Activated CD4-positive, alpha-beta memory T cell treated with anti-CD3 and anti-CD28 coated beads, Interleukin-2, amount 10 ng/mL, durations not matched to agents 7 days and 5 days (primary cell): ENCODE measurements at regions of chrX and their contacts with region 1.

Region 1: DNA sequence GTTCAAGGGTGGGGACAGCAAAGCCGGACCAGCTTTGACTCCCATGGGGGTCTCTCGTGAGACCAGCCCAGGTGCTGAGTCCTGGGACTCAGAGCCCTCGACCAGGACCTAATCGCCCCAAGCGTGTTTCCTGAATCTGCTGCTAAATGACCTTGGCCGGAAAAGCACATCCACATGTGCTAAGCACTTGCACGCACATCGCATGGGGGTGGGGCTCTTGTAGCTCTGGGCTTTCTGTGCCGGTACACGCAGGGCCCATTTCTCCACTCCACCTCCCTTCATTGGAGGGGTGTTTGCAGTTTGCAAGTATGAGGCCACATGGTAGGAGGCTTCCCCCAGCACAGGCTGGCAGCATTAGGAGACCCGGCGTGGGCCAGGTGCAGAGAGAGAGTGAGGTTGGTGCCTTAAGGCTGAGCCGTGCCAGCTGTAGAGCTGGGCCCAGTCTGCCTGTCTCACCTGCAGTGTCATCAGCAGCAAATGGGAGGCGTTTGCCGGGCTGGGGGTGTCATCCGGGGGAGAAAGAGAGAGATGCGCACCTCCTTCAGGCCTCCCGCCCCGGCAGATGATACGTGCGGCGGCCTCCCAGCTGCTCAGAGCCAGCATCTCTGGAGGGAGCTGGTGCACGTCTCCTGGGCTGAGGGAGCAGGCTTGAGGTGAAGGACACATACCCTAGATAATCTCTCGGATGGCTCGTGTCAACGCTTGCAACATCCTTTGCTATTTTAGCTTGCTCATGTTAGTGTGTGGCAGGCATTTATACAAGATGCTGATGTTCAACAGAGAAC is 45.2 kb upstream of the CLCN4 start:
- DNase-seq: peak; percentile 53
- H3K4me3 Mint-ChIP-seq: peak overlapping the region; percentile 71
- H3K27ac Mint-ChIP-seq: peak overlapping the region; percentile 98
- H3K4me1 Mint-ChIP-seq: peaks cover 59% of the 10 kb centered on the region
- H3K27me3 Mint-ChIP-seq: no peaks in the 10 kb centered on the region

Region 2: DNA sequence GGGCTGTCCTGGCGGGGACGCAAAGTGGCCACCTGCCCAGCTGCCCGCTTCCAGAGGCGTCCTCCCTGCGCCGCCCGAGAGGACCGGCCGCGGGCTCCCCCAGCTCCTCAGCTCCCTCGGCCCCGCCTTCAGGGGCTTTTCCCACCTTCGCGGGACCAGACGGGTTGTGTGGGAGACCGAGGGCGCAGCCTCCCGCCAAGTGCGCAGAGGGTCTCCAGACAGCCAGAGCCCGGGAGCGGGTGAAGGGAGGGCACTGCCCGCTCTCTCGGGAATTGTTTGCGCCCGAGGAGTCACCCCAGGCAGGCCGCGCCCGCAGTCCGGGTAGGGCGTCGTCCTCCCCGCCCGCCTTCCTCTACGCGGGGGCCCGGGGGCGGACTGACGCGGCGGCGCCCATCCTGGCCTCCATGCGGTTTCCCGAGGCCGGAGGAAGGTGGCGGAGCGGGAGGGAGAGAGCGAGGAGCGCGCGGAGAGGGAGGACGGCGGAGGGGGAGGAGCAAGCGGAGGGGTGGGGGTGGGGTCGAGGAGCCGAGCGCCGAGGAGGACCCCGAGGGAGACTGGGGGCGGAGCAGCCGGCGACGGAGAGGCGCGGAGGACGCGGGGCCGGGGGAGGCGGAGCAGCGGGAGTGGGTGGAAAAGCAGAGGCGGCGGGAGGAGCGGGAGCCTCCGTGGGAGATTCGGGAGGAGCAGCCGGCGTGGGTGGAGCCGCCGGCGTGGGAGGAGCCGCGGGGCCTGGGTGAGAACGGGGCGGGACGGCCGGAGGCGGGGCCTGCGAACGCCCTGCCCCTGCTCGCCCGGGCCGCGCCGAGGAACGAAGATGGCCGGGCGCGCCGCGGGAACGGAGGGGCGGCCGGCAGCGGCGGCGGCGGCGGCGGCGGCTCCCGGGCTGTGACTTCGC is 96.8 kb before region 1 on chrX:
- CTCF ChIA-PET with region 1: interaction called, 3 read pairs
- POLR2A ChIA-PET with region 1: interaction called, 17 read pairs
- DNase-seq: peak; percentile 79
- H3K4me3 Mint-ChIP-seq: peak overlapping the region; percentile 62
- H3K27ac Mint-ChIP-seq: no peak overlapping the region
- H3K4me1 Mint-ChIP-seq: peaks cover 39% of the 10 kb centered on the region
- H3K27me3 Mint-ChIP-seq: peaks cover 8% of the 10 kb centered on the region

Region 3: GRCh38 chrX:10083809-10084208 is 27.7 kb before region 1 on chrX:
- CTCF ChIA-PET with region 1: interaction called, 19 read pairs
- POLR2A ChIA-PET with region 1: interaction called, 19 read pairs
- DNase-seq: no peak
- H3K4me3 Mint-ChIP-seq: no peak overlapping the region
- H3K27ac Mint-ChIP-seq: peak overlapping the region; percentile 95
- H3K4me1 Mint-ChIP-seq: peaks cover 46% of the 10 kb centered on the region
- H3K27me3 Mint-ChIP-seq: no peaks in the 10 kb centered on the region

Region 4: DNA sequence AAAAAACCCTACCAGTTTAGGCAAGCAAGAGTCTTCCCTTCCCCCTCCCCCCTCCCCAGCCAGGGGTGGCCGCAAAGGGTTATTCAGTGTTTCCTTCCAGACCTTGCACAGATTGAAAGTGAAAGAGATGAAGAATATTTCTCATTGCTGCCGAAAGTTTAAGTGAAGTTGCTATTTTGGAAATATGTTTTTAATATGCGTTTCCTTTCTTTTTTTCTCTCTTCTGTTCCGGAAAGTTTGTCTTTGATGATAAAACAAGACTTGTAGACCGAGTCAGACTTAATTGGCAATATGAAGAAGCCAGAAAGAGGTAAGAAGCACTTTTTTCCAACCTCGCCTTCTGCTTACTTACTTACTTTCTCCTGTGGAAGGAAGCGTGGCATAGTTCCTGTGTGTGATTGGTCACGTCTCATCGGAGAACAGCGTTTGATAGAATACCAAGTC is 13.3 kb before region 1 on chrX:
- CTCF ChIA-PET with region 1: interaction called, 6 read pairs
- POLR2A ChIA-PET with region 1: interaction called, 29 read pairs
- DNase-seq: peak; percentile 68
- H3K4me3 Mint-ChIP-seq: peak overlapping the region; percentile 83
- H3K27ac Mint-ChIP-seq: peak overlapping the region; percentile 92
- H3K4me1 Mint-ChIP-seq: peaks cover 40% of the 10 kb centered on the region
- H3K27me3 Mint-ChIP-seq: no peaks in the 10 kb centered on the region